Adrenal gland (tissue), 19 donors: ENCODE measurements at regions of chr22 and their contacts with region 1.

Region 1: GRCh38 chr22:19194766-19195541 is 16.4 kb upstream of the SLC25A1 start:
- DNase-seq: no peak
- H3K4me3 ChIP-seq: no peak overlapping the region
- H3K27ac ChIP-seq: no peak overlapping the region
- H3K4me1 ChIP-seq: no peaks in the 10 kb centered on the region
- H3K27me3 ChIP-seq: no peaks in the 10 kb centered on the region
- CTCF ChIP-seq: no peak
- POLR2A ChIP-seq: no peak

Region 2: GRCh38 chr22:19240813-19241592 is 46.0 kb after region 1 on chr22:
- intact Hi-C with region 1: loop called in 1 of 2 experiments (anchors 5 kb)
- DNase-seq: peak in 1 of 7 donors; percentile 37
- H3K4me3 ChIP-seq: no peak overlapping the region
- H3K27ac ChIP-seq: no peak overlapping the region
- H3K4me1 ChIP-seq: no peaks in the 10 kb centered on the region
- H3K27me3 ChIP-seq: no peaks in the 10 kb centered on the region
- CTCF ChIP-seq: no peak
- POLR2A ChIP-seq: no peak